SK-N-SH (cell line): ENCODE measurements at regions of chr19 and their contacts with region 1.

Region 1: DNA sequence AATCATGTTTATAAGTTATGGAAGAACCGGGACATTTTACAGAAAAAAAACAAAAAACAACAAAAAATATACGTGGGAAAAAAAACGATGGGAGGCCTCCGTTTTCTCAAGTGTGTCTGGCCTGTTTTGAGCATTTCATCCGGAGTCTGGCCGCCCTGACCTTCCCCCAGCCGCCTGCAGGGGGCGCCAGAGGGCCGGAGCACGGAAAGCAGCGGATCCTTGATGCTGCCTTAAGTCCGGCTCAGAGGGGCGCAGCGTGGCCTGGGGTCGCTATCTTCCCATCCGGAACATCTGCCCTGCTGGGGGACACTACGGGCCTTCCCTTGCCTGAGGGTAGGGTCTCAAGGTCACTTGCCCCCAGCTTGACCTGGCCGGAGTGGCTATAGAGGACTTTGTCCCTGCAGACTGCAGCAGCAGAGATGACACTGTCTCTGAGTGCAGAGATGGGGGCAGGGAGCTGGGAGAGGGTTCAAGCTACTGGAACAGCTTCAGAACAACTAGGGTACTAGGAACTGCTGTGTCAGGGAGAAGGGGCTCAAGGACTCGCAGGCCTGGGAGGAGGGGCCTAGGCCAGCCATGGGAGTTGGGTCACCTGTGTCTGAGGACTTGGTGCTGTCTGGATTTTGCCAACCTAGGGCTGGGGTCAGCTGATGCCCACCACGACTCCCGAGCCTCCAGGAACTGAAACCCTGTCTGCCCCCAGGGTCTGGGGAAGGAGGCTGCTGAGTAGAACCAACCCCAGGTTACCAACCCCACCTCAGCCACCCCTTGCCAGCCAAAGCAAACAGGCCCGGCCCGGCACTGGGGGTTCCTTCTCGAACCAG is 1.8 kb upstream of the APOE start:
- DNase-seq: peak; percentile 88
- H3K4me3 ChIP-seq: peak overlapping the region in 1 of 2 experiments; percentile 42; a peak in 1 of 4 replicates
- H3K27ac ChIP-seq: no peak overlapping the region
- H3K4me1 ChIP-seq: peaks cover 0 to 12% of the 10 kb centered on the region in 2 experiments; a peak in 1 of 4 replicates
- H3K27me3 ChIP-seq: no peaks in the 10 kb centered on the region
- CTCF ChIP-seq: peak; percentile 99
- EP300 ChIP-seq: no peak
- RAD21 ChIP-seq: peak; percentile 82

Region 2: DNA sequence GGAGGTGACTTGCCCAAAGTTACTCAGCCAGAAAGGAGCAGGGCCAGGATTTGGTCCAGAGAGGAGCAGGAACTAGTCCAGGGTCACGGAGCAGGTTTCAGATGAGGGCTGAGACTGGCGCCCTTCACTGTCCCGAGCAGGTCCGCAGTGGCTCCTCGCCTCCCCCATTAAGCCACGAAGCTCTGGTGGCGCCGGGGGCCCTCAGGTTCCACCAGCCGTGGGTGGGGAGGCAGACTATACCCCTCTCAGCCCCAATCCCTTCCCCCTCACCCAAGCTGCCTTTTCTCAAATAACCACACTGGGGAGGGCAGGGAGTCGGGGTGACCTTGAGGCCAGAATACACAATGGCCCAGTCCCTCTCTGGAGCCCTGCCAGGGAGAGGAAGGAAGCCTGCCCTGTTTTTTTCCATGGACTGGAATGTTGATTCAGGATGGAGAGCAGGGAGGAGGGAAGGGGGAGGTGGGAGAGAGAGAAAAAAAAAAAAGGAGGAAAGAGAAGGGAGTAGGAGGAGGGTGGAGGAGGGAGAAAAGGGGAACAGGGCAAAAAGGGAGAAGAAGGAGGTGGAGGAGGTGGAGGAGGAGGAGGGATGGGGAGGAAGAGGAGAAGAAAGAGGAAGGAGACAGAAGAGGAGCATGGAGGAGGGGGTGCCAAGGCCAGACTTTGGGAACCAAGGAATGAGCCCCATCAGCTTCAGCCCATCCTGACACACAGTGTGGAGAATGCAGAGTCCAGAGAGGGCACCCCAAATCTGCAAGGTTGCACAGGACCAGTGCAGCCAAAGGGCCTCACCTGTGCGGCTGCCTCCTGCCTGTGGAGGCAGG is 185.2 kb before region 1 on chr19:
- CTCF ChIA-PET with region 1: no interaction called
- POLR2A ChIA-PET with region 1: no interaction called
- DNase-seq: no peak
- H3K4me3 ChIP-seq: peak overlapping the region in 1 of 2 experiments; percentile 37; a peak in 1 of 4 replicates
- H3K27ac ChIP-seq: peak overlapping the region; percentile 44 to 86
- H3K4me1 ChIP-seq: peaks cover 0 to 9% of the 10 kb centered on the region in 2 experiments; a peak in 3 of 4 replicates
- H3K27me3 ChIP-seq: no peaks in the 10 kb centered on the region
- CTCF ChIP-seq: no peak
- EP300 ChIP-seq: peak in 1 of 2 experiments; percentile 61; a peak in 1 of 4 replicates
- RAD21 ChIP-seq: no peak

Region 3: GRCh38 chr19:44820648-44821609 is 82.9 kb before region 1 on chr19:
- CTCF ChIA-PET with region 1: no interaction called
- POLR2A ChIA-PET with region 1: no interaction called
- DNase-seq: no peak
- H3K4me3 ChIP-seq: no peak overlapping the region
- H3K27ac ChIP-seq: no peak overlapping the region
- H3K4me1 ChIP-seq: no peaks in the 10 kb centered on the region
- H3K27me3 ChIP-seq: peaks cover 44% of the 10 kb centered on the region; the same call in 1 of the 2 replicates
- CTCF ChIP-seq: no peak
- EP300 ChIP-seq: no peak
- RAD21 ChIP-seq: no peak

Region 4: DNA sequence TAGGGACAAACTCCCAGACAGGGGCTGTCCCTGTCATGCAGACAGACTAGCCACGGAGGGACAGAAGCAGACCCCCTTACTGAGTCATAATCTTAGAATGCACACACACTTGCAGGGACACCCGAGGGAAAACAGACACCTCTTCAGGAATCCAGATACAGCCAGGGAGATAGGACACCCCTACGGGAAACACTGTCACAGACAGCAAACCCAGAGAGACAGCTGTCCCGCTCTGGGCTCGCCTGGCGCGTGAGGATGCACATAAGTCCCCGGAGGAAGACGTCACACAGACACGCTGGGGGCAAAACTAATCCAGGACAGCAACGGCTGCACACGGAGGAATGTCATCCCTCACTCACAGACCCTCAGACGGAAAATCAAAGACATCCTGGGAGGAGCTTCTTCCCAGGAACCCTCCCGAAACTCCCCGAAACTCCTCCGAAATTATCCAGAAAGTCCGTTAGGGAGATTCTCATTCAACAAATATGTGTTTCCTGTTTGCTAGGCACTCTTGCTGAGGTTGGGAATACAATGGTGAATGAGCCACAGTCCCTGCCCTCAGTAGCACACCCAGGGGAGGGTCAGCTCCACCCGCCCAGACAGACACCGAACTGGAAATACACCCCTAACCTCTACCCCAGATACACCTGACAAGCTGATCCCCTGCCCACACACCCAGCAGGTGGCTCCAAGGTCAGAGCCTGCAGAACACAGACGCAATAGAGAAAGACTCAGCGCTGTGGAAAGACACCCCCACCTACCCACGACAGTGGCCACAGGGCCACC is 28.0 kb before region 1 on chr19:
- CTCF ChIA-PET with region 1: no interaction called
- POLR2A ChIA-PET with region 1: no interaction called
- DNase-seq: no peak
- H3K4me3 ChIP-seq: 0 out of 4 replicates have a peak overlapping the region, but pooled peaks of 1 of the 2 experiments have one; percentile 4
- H3K27ac ChIP-seq: peak overlapping the region; percentile 29 to 66; a peak in 3 of 4 replicates
- H3K4me1 ChIP-seq: peaks cover 0 to 13% of the 10 kb centered on the region in 2 experiments; a peak in 3 of 4 replicates
- H3K27me3 ChIP-seq: no peaks in the 10 kb centered on the region
- CTCF ChIP-seq: no peak
- EP300 ChIP-seq: no peak
- RAD21 ChIP-seq: no peak

Region 5: GRCh38 chr19:44891016-44891823 is 12.6 kb before region 1 on chr19 and contains the start of gene TOMM40:
- CTCF ChIA-PET with region 1: interaction called, 16 read pairs
- POLR2A ChIA-PET with region 1: interaction called, 3 read pairs
- DNase-seq: peak; percentile 97
- H3K4me3 ChIP-seq: peak within 1 kb of the TSS; percentile 84 to 97
- H3K27ac ChIP-seq: peak within 1 kb of the TSS; percentile 92 to 93
- H3K4me1 ChIP-seq: peaks cover 8 to 21% of the 10 kb centered on the region in 2 experiments; a peak in 2 of 4 replicates
- H3K27me3 ChIP-seq: no peaks in the 10 kb centered on the region
- CTCF ChIP-seq: peak; percentile 24; the same call in 1 of the 2 replicates
- EP300 ChIP-seq: no peak
- RAD21 ChIP-seq: no peak
- polyA plus RNA-seq, gene TOMM40: 66.9 and 78.9 TPM in 2 replicates

Region 6: DNA sequence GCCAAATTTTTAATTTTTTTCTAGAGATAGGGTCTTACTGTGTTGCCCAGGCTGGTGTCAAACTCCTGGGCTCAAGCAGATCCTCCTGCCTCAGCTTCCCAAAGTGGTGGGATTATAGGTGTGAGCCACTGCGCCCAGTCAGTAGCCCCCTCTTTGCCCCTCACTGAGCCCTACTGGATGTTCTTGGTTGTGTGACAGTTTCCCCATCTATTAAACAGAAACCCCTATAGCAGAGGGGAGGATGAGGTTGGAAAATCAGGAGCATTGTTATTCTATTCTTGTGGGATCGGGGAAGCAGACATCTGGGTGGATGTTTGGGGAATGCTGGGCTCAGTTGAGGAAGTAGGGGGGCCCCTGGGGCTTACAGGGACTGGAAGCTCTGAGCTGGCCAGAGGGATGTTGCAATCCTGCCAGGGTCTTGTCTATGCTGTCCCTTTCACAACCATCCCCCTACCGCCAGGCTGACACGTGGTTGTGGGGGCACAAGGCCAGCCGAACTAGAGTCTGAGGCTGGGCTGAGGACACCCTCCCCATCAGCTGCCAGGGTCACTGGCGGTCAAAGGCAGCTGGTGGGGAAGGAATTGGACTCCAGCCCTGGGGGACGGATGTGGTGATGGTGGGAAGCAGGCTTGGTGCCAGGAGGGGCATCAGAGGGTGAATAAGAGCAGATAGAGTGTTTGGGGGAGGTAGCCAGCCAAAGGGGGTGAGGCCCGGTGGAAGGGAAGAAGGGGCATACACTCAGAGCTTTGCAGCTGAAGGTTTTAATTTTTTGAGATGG is 21.5 kb after region 1 on chr19:
- CTCF ChIA-PET with region 1: interaction called, 14 read pairs
- POLR2A ChIA-PET with region 1: no interaction called
- DNase-seq: no peak
- H3K4me3 ChIP-seq: no peak overlapping the region
- H3K27ac ChIP-seq: no peak overlapping the region
- H3K4me1 ChIP-seq: no peaks in the 10 kb centered on the region; a peak in 1 of 4 replicates
- H3K27me3 ChIP-seq: no peaks in the 10 kb centered on the region
- CTCF ChIP-seq: no peak
- EP300 ChIP-seq: no peak
- RAD21 ChIP-seq: no peak

Region 7: DNA sequence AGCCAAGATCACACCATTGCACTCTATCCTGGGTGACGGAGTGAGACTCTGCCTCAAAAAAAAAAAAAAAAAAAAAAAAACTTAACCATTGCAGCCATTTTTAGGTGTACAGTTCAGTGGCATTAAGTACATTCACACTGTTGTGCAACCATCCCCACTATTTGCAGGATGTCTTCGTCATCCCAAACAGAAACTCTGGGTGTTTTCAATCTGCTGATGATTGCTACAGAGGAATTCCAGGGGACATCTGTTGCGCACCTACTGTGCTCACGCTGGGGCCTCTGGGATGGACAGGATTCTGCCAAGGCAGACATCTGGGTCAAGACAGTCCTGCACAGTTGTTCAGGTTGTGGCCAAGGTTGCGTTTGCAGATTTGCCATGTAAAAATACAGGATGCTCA is 35.9 kb after region 1 on chr19:
- CTCF ChIA-PET with region 1: interaction called, 12 read pairs
- POLR2A ChIA-PET with region 1: no interaction called
- DNase-seq: no peak
- H3K4me3 ChIP-seq: no peak overlapping the region
- H3K27ac ChIP-seq: no peak overlapping the region
- H3K4me1 ChIP-seq: no peaks in the 10 kb centered on the region
- H3K27me3 ChIP-seq: no peaks in the 10 kb centered on the region
- CTCF ChIP-seq: no peak
- EP300 ChIP-seq: no peak
- RAD21 ChIP-seq: no peak

Region 8: GRCh38 chr19:44954824-44955586 is 51.2 kb after region 1 on chr19 and contains the start of gene CLPTM1:
- CTCF ChIA-PET with region 1: interaction called, 131 read pairs
- POLR2A ChIA-PET with region 1: no interaction called
- DNase-seq: peak; percentile 98
- H3K4me3 ChIP-seq: peak within 1 kb of the TSS; percentile 93 to 99
- H3K27ac ChIP-seq: peak within 1 kb of the TSS; percentile 94 to 98
- H3K4me1 ChIP-seq: peaks cover 0 to 25% of the 10 kb centered on the region in 2 experiments; a peak in 2 of 4 replicates
- H3K27me3 ChIP-seq: no peaks in the 10 kb centered on the region
- CTCF ChIP-seq: no peak
- EP300 ChIP-seq: no peak
- RAD21 ChIP-seq: no peak
- polyA plus RNA-seq, gene CLPTM1: 58.4 and 86.5 TPM in 2 replicates